A549 (cell line): ENCODE measurements at regions of chr2 and their contacts with region 1.

Region 1: DNA sequence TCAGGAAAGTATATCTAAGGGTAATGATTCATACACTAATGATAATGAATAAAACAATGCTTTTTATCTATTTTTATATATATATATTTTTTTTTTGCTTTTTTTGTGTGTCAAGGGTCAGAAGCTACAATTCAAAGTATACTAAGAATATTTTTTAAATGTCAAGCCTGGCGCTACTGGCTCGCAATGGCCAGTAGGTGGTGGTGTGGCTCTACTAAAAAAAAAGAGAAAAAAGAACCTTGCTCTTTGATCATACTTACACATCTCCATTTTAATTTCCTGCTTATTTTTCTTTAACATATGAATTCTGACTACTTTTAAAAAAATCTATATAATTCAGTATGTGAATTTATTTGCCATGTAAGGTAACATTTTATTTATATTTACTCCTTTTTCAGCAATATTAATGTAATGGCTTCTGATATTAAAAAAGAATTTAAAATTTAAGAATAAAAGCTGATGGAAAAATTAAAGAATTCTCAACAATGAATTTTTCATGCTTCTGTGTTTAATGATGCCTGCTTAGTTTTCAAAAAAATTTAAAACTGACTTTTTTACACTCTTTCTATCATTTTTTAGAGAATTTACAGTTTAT is 232.9 kb downstream of the GULP1 start:
- DNase-seq: peak; percentile 10 to 62
- ATAC-seq: peak in 1 of 2 experiments; percentile 63; a peak in 3 of 6 replicates
- H3K4me3 ChIP-seq: no peak overlapping the region
- H3K27ac ChIP-seq: peak overlapping the region in 1 of 2 experiments; percentile 30; a peak in 1 of 6 replicates
- H3K4me1 ChIP-seq: peaks cover 8% of the 10 kb centered on the region; the same call in 1 of the 3 replicates
- CTCF ChIP-seq: peak; percentile 93
- EP300 ChIP-seq: no peak
- POLR2A ChIP-seq: no peak
- RAD21 ChIP-seq: peak; percentile 84 to 92

Region 2: DNA sequence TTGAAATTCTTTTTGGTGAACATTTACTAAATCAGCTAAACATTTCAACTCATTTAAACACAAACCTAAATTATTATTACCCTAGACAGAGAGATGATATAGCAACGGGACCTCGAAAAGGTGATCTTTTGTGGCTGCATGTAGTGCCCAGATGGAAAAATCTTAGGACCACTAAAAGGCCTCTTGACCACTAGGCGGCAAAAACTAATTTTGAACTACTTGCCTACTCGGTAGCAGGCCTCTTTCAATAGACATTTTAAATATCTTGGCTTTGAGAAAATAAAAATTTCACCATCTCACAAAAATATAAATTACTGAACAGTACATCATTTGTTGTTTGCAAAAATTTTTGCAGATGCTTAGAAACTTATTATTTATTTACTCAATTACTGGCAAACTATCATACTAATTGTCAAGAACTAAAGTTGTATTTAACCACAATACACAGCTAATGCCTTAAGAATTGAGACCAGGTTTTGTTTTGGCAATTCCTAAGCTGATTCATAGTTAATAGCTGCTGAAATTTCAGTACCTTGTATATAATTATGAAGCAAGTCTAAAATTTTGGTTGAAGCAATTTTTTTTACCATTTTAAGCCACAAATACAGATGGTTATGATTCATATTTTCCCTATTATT is 458.9 kb after region 1 on chr2:
- CTCF ChIA-PET with region 1: interaction called, 10 read pairs
- POLR2A ChIA-PET with region 1: no interaction called
- DNase-seq: no peak
- ATAC-seq: 0 out of 6 replicates have a peak, but pooled peaks of 1 of the 2 experiments have one; percentile 42
- H3K4me3 ChIP-seq: no peak overlapping the region
- H3K27ac ChIP-seq: no peak overlapping the region
- H3K4me1 ChIP-seq: peaks cover 17% of the 10 kb centered on the region; the same call in 2 of the 3 replicates
- CTCF ChIP-seq: no peak
- EP300 ChIP-seq: no peak
- POLR2A ChIP-seq: no peak
- RAD21 ChIP-seq: 0 out of 5 replicates have a peak, but pooled peaks of 1 of the 2 experiments have one; percentile 17

Region 3: DNA sequence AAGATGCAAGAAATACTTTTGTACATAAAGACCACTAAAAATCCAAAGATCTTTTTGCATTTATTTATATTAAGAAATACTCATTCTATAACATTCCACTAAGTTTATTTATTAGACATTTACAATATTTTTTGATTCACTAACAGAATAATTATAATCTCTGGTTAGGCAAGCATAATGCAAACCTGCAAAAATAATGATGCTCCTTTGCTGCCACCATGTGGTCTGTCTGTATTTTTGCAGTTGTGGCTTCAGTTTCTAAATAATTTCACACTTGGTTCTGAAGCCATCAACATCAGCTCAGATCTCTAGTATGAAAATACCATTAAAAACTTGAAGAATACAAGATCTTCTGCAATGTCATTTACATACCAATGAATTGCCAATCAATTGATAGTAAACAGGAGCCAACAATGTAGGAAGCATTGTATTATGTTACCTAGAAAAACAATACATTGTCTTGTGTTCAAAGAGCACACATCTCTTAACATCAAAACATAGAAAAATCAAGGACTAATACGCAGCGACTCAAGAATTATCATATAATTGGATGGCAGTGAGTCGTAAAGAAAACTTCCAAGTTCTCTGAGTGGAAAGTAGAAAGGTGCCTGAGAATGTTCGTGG is 887.8 kb after region 1 on chr2:
- CTCF ChIA-PET with region 1: interaction called, 43 read pairs
- POLR2A ChIA-PET with region 1: no interaction called
- DNase-seq: peak; percentile 12 to 53
- ATAC-seq: peak in 1 of 2 experiments; percentile 77; a peak in 3 of 6 replicates
- H3K4me3 ChIP-seq: no peak overlapping the region
- H3K27ac ChIP-seq: peak overlapping the region; percentile 61 to 66; a peak in 4 of 6 replicates
- H3K4me1 ChIP-seq: peaks cover 33% of the 10 kb centered on the region
- CTCF ChIP-seq: peak; percentile 94
- EP300 ChIP-seq: no peak
- POLR2A ChIP-seq: no peak
- RAD21 ChIP-seq: peak; percentile 95 to 97